ENCODE measurements at regions of chr5 and their contacts with region 1.

Region 1: DNA sequence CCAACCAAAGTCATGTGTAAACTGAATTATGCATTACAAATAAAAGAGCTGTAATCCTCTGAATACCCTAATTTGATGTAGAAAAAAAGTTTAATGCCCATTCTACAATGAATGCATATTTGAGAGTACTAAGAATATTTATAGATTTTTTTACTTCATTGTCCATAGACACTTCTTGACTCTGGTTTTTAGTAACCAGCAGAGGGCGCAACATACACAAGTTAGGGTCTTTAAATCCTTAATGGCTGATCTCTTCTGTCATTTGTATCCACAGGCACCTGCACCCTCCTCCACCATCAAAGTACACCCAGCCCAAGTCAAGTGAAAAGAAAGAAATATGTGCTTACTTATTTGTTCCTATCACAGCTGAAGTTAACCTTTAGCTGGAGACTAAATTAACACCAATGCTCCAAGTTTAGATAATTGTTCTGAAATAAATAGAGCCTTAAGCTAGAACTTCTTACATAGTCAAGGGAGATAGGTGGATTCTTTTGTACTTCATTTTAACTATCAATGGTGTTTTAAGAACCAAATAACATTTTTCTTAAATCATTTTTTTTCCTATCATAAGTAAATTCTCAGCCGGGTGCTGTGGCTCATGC is 524.2 kb upstream of the DAB2 start:
- DNase-seq: peak; percentile 79
- H3K4me3 Mint-ChIP-seq: no peak overlapping the region
- H3K27ac Mint-ChIP-seq: no peak overlapping the region
- H3K4me1 Mint-ChIP-seq: peaks cover 5% of the 10 kb centered on the region
- H3K27me3 Mint-ChIP-seq: no peaks in the 10 kb centered on the region

Region 2: DNA sequence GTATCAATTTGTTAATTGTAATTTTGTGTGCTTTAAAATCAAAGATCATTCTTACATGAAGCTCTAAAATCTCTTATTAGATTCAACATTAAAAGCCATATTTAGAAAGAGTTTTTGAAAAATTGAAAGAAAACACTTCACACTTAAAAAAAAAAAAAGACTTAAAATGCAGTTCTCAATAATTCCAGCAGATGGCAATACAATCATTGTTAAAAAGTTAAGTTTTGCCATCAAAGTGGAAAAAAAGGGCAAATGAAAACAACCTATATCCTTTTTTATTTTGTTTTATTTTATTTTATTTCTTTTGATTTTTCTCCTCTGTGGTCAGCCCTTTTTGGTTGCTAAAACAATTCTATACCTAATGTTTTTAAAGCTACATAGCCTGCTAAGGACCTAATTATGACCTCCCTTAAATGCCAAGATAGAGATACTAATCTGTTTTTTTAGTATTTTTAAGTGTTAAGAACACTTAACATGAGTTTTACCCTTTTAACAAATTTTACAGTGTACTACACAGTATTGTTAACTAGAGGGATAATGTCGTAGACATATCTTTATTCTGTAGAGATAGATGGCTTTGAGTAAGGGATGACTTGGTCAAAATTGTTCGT is 370.0 kb before region 1 on chr5:
- CTCF ChIA-PET with region 1: no interaction called
- intact Hi-C with region 1: loop called (anchors 5 kb)
- DNase-seq: no peak
- H3K4me3 Mint-ChIP-seq: no peak overlapping the region
- H3K27ac Mint-ChIP-seq: no peak overlapping the region
- H3K4me1 Mint-ChIP-seq: peaks cover 8% of the 10 kb centered on the region
- H3K27me3 Mint-ChIP-seq: no peaks in the 10 kb centered on the region

Region 3: DNA sequence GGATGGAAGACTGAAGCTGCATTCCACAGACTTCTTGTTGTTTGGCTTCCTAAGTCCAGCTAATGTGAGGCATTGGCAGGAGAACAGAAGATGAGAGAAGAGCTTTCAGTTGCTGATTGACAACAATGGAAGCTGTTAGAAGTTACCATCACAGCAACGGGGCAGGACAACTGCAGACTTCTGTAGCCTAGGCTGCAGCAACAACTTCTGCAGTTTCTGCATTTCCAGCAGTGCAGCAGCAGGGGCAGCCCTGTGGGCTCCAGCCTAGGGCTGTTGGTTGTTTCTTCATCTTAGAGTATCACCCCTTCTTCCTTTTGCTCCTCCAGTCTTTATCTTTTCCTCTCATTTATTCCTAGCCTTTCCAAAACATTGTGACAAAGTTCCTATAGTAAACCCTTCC is 201.9 kb after region 1 on chr5:
- CTCF ChIA-PET with region 1: no interaction called
- intact Hi-C with region 1: loop called (anchors 5 kb)
- DNase-seq: no peak
- H3K4me3 Mint-ChIP-seq: no peak overlapping the region
- H3K27ac Mint-ChIP-seq: no peak overlapping the region
- H3K4me1 Mint-ChIP-seq: no peaks in the 10 kb centered on the region
- H3K27me3 Mint-ChIP-seq: peaks cover 3% of the 10 kb centered on the region

Region 4: DNA sequence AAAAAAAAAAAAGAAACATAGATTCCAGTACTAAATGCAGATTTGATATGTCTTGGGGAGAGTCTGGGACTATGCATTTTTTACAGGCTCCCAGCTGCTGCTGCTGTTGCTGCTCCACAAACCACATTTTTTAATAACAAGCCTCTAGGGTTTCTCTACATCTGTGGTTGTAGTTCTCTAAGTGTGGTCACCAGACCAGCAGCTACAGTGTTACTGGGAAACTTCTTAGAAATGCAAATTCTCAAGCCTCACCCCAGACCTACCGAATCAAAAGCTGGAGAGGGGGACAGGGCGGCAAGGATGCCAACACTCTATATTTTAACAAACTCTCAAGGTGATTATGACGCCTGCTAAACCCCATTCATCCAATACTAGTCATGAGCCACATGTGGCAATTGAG is 437.3 kb after region 1 on chr5:
- CTCF ChIA-PET with region 1: interaction called, 3 read pairs
- intact Hi-C with region 1: loop called (anchors 1 kb)
- DNase-seq: peak; percentile 34
- H3K4me3 Mint-ChIP-seq: no peak overlapping the region
- H3K27ac Mint-ChIP-seq: peak overlapping the region; percentile 85
- H3K4me1 Mint-ChIP-seq: peaks cover 81% of the 10 kb centered on the region
- H3K27me3 Mint-ChIP-seq: no peaks in the 10 kb centered on the region

Region 5: DNA sequence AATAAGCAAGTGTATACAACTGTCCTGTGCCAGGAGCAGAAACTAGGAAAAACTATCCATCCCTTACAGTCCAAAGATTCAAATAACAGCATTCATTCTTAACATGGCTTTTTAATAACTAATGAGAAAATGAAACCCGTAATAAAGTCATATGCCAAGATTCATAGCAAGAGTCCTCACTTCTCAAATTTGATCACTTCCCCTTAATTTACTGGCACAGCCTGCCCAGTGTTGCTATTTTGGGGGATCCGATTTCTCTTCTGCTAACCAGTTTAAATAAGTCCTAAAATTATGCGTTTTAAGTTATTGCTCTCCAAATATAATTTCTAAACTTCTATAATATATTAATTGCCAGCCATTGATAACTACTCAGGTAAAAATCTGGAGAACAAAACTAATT is 553.8 kb after region 1 on chr5:
- CTCF ChIA-PET with region 1: no interaction called
- intact Hi-C with region 1: loop called (anchors 2 kb)
- DNase-seq: no peak
- H3K4me3 Mint-ChIP-seq: no peak overlapping the region
- H3K27ac Mint-ChIP-seq: no peak overlapping the region
- H3K4me1 Mint-ChIP-seq: peaks cover 24% of the 10 kb centered on the region
- H3K27me3 Mint-ChIP-seq: no peaks in the 10 kb centered on the region

Region 6: DNA sequence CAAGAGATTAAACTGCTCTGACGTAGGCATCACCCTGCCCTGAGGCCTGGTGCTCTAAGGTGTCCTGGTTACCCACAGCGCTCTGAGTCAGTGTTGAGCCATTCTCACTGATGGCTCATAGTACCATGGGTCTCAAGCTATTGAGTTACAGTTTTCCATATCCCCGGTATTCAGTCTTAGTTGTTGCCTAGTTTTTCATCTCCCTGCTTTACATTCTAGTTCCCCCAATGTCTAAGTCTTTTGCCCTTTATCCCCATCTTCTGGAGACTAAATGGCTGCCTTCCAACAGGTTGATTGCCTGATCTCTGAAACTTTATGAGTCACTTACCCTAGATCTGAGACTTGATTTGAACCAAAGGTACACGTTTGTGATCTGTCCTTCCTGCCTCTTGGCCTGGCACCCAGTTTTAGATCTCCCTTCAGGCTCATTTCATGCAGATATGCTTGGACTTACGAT is 569.6 kb after region 1 on chr5:
- CTCF ChIA-PET with region 1: no interaction called
- intact Hi-C with region 1: no loop called
- DNase-seq: peak; percentile 19
- H3K4me3 Mint-ChIP-seq: no peak overlapping the region
- H3K27ac Mint-ChIP-seq: no peak overlapping the region
- H3K4me1 Mint-ChIP-seq: peaks cover 34% of the 10 kb centered on the region
- H3K27me3 Mint-ChIP-seq: no peaks in the 10 kb centered on the region

Region 7: DNA sequence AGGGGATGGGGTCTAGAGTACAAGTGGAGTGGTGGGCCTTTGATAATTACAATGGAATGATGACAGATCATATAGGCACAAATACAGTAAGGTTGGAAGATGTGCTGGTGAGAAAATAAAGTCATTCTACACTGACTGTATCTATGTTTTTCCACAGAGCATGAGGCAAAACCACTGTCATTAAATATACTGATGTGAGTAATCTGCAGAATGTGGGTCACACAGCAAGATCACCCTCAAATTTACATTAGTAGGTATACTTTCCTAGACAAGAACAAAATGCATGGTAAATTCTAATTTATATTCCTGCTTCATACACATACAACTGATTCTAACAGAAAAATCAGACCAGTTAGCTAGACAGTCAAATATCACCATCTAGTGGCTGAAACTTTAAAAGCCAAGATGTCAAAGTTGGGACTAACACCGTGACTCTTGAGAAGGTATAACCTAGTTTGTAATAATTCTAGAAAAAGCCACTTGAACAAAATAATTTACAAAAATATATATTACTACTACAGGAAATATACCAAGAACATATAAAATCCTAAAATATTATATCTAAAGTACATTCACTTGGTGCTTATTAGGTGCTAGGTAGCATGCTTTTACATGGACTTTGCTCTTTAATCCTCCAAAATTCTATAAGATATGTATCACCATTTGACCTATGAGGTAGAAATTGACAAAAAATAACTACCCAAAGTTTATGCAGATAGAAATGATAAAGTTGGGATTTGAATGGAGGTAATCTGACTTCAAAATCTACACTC is 787.3 kb after region 1 on chr5:
- CTCF ChIA-PET with region 1: interaction called, 22 read pairs
- intact Hi-C with region 1: loop called (anchors 1 kb)
- DNase-seq: no peak
- H3K4me3 Mint-ChIP-seq: no peak overlapping the region
- H3K27ac Mint-ChIP-seq: no peak overlapping the region
- H3K4me1 Mint-ChIP-seq: peaks cover 26% of the 10 kb centered on the region
- H3K27me3 Mint-ChIP-seq: no peaks in the 10 kb centered on the region

Region 8: DNA sequence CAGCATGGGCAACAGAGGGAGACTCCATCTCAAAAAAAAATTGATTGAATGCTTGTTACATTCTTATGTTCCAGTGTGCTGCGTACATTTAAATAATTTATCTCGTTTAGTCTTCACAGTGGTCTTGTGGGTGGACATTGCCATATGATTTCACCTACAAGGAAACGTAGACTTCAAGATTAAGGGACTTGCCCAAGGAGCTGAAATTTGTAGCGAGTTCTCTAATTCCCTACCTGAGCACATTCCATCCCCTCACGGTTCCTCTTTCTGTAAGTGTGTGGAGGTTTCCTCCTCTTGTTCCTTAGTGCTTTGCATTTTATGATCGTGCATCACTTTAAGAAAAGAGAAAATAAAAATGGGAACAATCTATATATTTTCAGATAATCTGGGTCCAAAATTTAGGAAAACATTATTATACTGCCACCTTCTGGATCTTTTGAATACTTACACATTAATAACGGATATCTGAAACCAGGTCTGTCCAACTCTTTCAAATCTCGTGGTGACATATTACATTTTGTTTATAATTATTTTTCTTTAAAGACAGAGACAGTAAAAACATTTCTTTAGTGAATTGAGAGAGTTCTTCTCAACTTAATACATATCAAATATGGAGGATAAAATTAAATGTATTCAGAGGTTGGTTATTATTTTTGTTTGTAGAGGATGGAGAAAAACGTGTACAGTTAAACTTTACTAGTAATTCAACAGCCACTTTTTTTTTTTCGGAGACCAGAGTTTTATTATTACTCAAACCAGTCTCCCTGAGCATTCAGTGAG is 930.4 kb after region 1 on chr5:
- CTCF ChIA-PET with region 1: no interaction called
- intact Hi-C with region 1: loop called (anchors 1 kb)
- DNase-seq: no peak
- H3K4me3 Mint-ChIP-seq: no peak overlapping the region
- H3K27ac Mint-ChIP-seq: no peak overlapping the region
- H3K4me1 Mint-ChIP-seq: peaks cover 4% of the 10 kb centered on the region
- H3K27me3 Mint-ChIP-seq: no peaks in the 10 kb centered on the region

Measured in activated naive CD4-positive, alpha-beta T cell treated with anti-CD3 and anti-CD28 coated beads for 36 hours (primary cell).